Thyroid gland (tissue), 4 donors: ENCODE measurements at regions of chr10 and their contacts with region 1.

Region 1: DNA sequence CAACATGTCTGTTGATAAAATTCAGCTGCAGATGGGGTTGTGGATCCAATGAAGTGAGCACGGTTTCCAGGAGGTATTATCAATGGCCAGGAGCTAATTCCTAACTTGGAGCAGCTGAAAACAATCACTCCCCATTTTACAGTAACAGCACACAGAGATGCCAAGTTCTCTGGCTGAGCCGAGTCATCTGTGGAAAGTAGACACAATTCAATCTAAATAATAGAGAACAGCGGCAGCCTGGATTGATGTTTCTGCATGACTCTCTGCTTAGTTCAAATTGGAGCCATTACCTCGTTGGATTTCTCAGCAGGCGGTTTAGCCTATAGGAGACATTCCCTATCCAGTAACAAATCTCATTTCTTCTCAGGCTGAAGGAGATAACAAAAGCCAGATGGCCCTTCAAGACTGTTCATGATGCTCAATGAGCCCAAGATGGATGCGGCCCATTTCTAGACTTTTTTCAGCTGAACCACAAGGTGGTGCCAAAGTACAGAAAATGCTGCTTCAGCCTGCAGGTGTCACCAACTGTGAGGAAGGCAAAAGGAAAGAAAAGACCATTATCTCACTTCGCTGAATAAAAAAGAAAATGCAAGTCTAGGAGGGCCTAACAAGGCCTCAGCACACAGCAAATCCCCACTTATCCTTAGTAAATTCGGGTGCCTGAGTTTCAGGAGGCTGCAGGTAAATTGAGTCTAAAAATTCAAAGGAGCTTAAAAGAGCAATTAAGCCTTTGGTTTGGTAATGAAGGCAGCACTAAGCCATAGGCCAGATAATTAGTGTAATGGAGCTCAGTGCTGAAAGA is 83.7 kb downstream of the SLC16A9 start:
- DNase-seq: peak; percentile 26 to 28
- H3K4me3 ChIP-seq: no peak overlapping the region
- H3K27ac ChIP-seq: no peak overlapping the region
- H3K4me1 ChIP-seq: peaks cover 0 to 3% of the 10 kb centered on the region in 2 donors
- H3K27me3 ChIP-seq: no peaks in the 10 kb centered on the region
- CTCF ChIP-seq: peak; percentile 62 to 98 (median 82)
- POLR2A ChIP-seq: no peak

Region 2: DNA sequence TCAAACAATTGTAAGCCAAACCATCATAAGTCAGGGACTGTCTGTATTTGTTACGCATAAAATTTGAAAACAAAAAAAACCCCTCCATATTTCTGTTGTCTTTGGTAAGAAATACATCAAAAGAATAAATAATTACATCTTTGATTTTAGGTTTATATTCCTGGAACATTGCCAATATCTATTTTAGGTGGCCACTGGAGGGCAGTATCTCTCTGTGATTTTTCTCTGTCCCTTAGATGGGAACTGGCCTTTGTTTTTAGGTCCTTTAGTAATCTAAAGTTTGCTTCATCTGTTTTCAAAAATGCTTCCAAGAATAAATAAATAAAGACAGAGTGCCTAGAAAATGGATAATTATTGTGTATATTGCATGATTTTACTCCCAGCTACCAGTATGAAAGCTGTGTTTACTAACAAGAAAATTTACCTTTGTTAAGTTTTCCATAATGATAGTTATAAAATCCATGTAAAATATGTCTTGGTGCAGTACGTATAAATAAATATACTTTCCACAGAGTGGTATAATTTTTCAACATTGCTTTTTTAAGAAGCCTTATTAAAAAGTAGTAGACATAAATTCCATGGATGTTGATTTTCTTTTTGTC is 385.2 kb before region 1 on chr10:
- intact Hi-C with region 1: loop called (anchors 5 kb)
- DNase-seq: no peak
- H3K4me3 ChIP-seq: no peak overlapping the region
- H3K27ac ChIP-seq: no peak overlapping the region
- H3K4me1 ChIP-seq: no peaks in the 10 kb centered on the region
- H3K27me3 ChIP-seq: no peaks in the 10 kb centered on the region
- CTCF ChIP-seq: peak; percentile 31 to 88 (median 66)
- POLR2A ChIP-seq: no peak

Region 3: DNA sequence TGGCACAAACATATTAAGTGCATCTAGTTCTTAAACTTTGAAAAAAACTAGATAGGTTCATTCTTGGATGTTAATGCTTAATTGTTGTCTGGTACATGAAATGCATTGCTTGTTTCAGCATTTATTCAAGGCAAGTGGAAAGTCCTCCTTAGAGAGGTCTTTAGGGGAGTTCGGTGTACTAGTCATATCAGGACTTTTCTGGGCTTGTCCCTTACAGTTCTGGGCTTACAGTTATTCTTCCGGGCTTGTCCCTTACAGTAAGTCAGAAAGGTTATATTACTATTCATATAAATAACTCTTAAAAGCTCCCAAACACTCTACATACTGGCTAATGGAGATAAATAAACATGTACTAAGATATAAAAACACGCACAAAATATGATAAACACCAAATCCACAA is 189.0 kb after region 1 on chr10:
- intact Hi-C with region 1: loop called (anchors 5 kb)
- DNase-seq: no peak
- H3K4me3 ChIP-seq: no peak overlapping the region
- H3K27ac ChIP-seq: no peak overlapping the region
- H3K4me1 ChIP-seq: peaks cover 2 to 12% of the 10 kb centered on the region in 2 donors
- H3K27me3 ChIP-seq: no peaks in the 10 kb centered on the region
- CTCF ChIP-seq: no peak
- POLR2A ChIP-seq: no peak

Region 4: DNA sequence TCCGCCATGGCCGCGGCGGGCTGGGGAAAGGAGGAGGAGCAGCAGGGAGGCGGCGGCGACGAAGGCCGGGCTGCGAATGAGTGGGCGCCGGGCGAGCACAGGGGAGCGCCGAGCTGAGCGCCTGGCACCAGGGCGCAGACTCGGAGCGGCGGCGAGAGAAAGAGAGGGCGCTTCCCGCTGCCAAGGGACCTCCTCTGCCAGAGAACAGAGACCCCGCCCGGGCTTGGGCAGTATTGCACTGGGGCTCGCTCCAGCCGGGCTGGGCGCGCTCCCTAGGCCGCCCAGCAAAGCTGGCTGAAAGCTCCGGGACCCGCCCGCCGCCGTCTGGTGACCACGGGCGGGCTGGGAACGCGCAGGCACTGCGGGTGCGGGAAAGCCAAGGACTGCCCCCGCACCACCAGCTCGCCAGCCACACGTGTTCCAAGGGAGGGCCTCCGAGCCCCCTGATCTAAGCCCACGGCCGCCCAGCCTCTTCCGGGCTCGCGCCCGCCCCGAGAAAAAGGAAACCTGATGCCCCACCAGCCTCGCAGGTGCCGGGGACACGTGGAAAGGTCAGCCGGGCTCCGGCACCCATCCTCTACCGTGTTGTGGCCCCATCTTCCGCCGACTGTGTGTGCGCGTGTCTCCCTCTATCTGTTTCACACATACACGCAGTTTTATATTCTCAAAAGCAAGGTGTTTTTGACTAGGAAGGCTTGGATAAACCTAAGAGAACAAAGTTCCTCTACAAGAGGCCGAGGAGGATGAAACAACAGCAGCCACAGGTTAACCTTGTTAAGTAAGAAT is 280.7 kb after region 1 on chr10 and contains the start of gene CCDC6:
- intact Hi-C with region 1: loop called (anchors 10 kb)
- DNase-seq: peak; percentile 96
- H3K4me3 ChIP-seq: peak within 1 kb of the TSS; percentile 43 to 91 (median 71)
- H3K27ac ChIP-seq: peak within 1 kb of the TSS; percentile 97
- H3K4me1 ChIP-seq: peaks cover 21 to 27% of the 10 kb centered on the region in 2 donors
- H3K27me3 ChIP-seq: no peaks in the 10 kb centered on the region
- CTCF ChIP-seq: peak; percentile 49 to 91 (median 78)
- POLR2A ChIP-seq: peak; percentile 79 to 97
- total RNA-seq, gene CCDC6: 59.3 to 79.3 (median 64.8) TPM

Region 5: DNA sequence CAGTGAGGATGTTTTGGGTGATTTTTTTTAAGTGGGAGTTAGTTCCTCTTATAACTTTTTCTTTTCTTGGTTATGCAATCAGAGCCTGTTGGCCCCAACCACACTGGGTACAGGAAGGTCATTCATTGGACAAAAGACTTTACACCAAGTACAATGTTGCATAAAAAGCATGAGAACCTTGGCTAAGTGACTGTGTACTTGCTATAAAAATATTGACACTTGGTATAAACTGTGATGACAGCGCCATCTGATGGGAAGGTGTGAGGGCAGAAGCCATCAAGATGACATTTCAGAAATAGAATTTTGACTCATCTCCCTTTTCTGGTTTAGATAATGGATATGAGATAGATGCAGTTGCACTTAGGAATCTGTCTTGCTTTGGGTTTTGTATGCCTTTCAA is 406.8 kb after region 1 on chr10:
- intact Hi-C with region 1: loop called (anchors 10 kb)
- DNase-seq: peak; percentile 45 to 52
- H3K4me3 ChIP-seq: no peak overlapping the region
- H3K27ac ChIP-seq: no peak overlapping the region
- H3K4me1 ChIP-seq: peaks cover 0 to 4% of the 10 kb centered on the region in 2 donors
- H3K27me3 ChIP-seq: no peaks in the 10 kb centered on the region
- CTCF ChIP-seq: peak in 5 of 6 experiments; percentile 45 to 70 (median 59)
- POLR2A ChIP-seq: no peak